PC-3 (cell line): ENCODE measurements at regions of chr7 and their contacts with region 1.

Region 1: DNA sequence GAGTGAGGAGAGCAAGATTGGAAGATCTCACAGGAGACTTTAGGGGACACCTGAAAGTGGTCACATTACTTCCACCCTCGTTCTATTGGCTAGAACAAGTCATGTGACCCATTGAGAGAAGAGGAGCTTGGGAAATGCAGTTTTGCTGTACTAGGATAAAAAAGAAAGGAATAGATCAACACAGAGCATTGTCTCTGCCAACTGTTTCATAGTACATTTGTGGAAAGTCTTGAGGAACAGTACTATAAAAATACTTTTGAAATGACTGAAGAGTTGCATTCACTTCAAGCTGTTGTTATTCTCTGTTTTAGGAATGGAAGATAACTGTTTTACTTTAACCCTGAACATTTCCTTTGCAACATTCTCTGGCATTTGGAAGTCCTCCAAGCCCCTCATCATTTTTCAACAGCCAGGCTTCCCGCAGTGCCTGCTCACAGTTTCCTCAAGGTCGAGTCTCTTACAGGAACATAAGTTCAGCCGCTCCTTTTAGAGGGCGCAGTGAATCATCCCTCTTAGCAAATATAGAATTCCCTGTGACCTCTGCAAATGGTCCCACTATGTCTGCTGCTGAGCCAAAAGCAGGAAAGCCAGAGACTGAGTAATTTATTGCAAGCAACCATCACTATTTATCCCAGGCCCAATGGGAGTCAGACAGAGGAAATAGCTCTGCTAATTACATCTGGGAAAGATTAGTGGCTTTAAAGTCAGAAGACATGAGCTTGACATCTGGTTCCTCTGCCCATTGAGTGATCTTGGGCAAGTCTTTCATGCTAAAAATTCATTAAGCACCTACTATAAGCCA is 40.7 kb downstream of the MRPL32 start:
- DNase-seq: peak; percentile 72
- ATAC-seq: peak; percentile 97
- H3K4me3 ChIP-seq: no peak overlapping the region
- H3K27ac ChIP-seq: peak overlapping the region; percentile 28
- H3K4me1 ChIP-seq: peaks cover 17% of the 10 kb centered on the region
- H3K27me3 ChIP-seq: no peaks in the 10 kb centered on the region
- CTCF ChIP-seq: no peak

Region 2: GRCh38 chr7:42831718-42832431 is 141.0 kb before region 1 on chr7:
- CTCF ChIA-PET with region 1: no interaction called
- POLR2A ChIA-PET with region 1: no interaction called
- intact Hi-C with region 1: no loop called
- DNase-seq: peak; percentile 70
- ATAC-seq: peak; percentile 97
- H3K4me3 ChIP-seq: peak overlapping the region; percentile 50
- H3K27ac ChIP-seq: no peak overlapping the region
- H3K4me1 ChIP-seq: peaks cover 17% of the 10 kb centered on the region; the same call in 1 of the 2 replicates
- H3K27me3 ChIP-seq: no peaks in the 10 kb centered on the region; the same call in 1 of the 2 replicates
- CTCF ChIP-seq: peak; percentile 87

Region 3: GRCh38 chr7:42931834-42932651 is 40.9 kb before region 1 on chr7 and contains the starts of genes MRPL32 and PSMA2:
- CTCF ChIA-PET with region 1: no interaction called
- POLR2A ChIA-PET with region 1: no interaction called
- intact Hi-C with region 1: loop called (anchors 5 kb)
- DNase-seq: peak; percentile 97
- ATAC-seq: peak; percentile 99
- H3K4me3 ChIP-seq: peak within 1 kb of the TSS; percentile 96
- H3K27ac ChIP-seq: peak within 1 kb of the TSS; percentile 38
- H3K4me1 ChIP-seq: peaks cover 21% of the 10 kb centered on the region
- H3K27me3 ChIP-seq: no peaks in the 10 kb centered on the region
- CTCF ChIP-seq: no peak
- total RNA-seq, gene MRPL32: 75.4 and 104 TPM in 2 replicates
- total RNA-seq, gene PSMA2: 69.7 and 85.6 TPM in 2 replicates

Region 4: DNA sequence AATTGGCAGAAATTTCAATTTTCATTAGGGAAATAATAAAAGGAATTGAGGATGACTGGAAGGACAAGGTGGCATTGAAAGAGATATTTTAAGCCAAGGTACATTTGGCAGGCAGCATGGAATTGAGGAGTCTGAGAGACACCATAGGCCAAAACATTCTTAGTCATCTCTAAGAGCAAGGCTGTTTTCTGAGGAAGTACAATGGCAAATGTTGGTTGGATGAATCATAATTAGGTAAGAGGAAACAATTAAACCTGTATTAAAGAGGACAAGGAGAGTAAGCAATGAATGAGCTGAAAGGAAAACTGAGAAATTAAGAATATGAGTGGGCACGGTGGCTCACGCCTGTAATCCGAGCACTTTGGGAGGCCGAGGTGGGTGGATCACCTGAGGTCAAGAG is 45.5 kb after region 1 on chr7:
- CTCF ChIA-PET with region 1: no interaction called
- POLR2A ChIA-PET with region 1: no interaction called
- intact Hi-C with region 1: loop called (anchors 2 kb)
- DNase-seq: peak; percentile 91
- ATAC-seq: peak; percentile 99
- H3K4me3 ChIP-seq: no peak overlapping the region
- H3K27ac ChIP-seq: peak overlapping the region; percentile 38
- H3K4me1 ChIP-seq: peaks cover 7% of the 10 kb centered on the region
- H3K27me3 ChIP-seq: no peaks in the 10 kb centered on the region
- CTCF ChIP-seq: no peak

Region 5: DNA sequence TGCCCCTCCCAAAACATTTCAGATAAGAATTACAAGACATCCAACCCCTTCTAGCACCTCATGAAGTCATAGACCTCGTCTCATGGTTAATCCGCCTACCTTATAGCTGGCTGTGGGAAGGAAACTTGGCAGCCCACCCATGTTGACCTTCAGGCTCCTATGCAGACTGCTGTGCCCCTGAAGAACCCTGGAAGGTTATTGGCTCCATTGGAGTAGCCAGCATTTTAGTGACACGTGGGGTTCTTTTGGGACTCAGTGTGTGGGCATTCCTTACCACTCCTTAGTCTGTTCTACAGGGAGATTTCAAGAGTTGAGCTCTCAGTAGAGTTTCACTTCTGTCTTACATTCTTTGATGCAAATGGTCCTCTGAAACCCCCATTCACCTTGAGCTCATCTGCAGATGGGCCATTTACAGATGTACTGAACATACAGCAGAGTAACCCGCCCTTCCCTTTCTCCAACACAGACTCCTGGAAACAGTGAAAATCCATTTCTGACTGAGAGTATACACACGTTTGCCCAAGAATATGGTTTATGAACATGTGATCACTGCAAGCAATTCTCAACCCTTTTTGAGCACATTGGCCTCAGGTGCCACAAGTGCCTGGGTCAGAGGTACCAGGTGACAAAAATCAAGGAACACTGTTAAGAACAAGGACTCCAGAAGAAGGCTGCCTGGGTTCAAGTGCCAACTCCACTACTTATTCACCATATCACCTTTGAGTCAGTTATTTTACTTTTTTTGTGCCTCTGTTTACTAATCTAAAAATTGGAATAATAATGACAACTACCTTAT is 85.6 kb after region 1 on chr7:
- CTCF ChIA-PET with region 1: no interaction called
- POLR2A ChIA-PET with region 1: no interaction called
- intact Hi-C with region 1: no loop called
- DNase-seq: no peak
- ATAC-seq: peak; percentile 59
- H3K4me3 ChIP-seq: peak overlapping the region; percentile 62
- H3K27ac ChIP-seq: 0 out of 2 replicates have a peak overlapping the region, but pooled peaks have one; percentile 1
- H3K4me1 ChIP-seq: peaks cover 7% of the 10 kb centered on the region; the same call in 1 of the 2 replicates
- H3K27me3 ChIP-seq: no peaks in the 10 kb centered on the region
- CTCF ChIP-seq: no peak